ENCODE measurements at regions of chr19 and their contacts with region 1.

Region 1: GRCh38 chr19:46265217-46265828 is 31.5 kb upstream of the HIF3A start:
- DNase-seq: peak; percentile 73 to 80 (median 75)
- ATAC-seq: peak; percentile 89
- H3K4me3 ChIP-seq: no peak overlapping the region
- H3K27ac ChIP-seq: no peak overlapping the region
- H3K4me1 ChIP-seq: no peaks in the 10 kb centered on the region
- H3K27me3 ChIP-seq: peaks cover 0 to 9% of the 10 kb centered on the region in 2 donors
- CTCF ChIP-seq: peak; percentile 63 to 96 (median 94)
- POLR2A ChIP-seq: no peak

Region 2: DNA sequence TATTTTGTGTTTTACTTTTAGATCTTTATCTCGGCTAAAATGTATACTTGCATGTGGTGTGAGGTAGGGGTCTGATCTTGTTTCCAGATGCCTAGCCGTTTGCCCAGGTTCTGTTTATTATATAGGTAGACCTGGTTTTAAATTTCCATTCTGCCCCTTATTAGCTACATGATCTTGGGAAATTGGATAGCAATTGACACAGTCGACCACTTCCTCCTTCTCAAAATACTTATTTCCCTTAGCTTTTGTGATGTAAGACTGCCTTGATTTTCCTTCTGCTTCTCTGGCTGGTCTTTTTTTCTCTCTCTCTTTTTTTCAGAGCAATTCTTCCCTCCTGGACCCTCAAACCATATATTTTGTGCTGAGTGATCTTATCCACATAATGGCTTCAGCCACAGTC is 239.5 kb before region 1 on chr19:
- intact Hi-C with region 1: loop called (anchors 5 kb)
- DNase-seq: no peak
- ATAC-seq: no peak
- H3K4me3 ChIP-seq: no peak overlapping the region
- H3K27ac ChIP-seq: no peak overlapping the region
- H3K4me1 ChIP-seq: no peaks in the 10 kb centered on the region
- H3K27me3 ChIP-seq: peaks cover 2 to 15% of the 10 kb centered on the region in 2 donors
- CTCF ChIP-seq: no peak
- POLR2A ChIP-seq: no peak

Region 3: DNA sequence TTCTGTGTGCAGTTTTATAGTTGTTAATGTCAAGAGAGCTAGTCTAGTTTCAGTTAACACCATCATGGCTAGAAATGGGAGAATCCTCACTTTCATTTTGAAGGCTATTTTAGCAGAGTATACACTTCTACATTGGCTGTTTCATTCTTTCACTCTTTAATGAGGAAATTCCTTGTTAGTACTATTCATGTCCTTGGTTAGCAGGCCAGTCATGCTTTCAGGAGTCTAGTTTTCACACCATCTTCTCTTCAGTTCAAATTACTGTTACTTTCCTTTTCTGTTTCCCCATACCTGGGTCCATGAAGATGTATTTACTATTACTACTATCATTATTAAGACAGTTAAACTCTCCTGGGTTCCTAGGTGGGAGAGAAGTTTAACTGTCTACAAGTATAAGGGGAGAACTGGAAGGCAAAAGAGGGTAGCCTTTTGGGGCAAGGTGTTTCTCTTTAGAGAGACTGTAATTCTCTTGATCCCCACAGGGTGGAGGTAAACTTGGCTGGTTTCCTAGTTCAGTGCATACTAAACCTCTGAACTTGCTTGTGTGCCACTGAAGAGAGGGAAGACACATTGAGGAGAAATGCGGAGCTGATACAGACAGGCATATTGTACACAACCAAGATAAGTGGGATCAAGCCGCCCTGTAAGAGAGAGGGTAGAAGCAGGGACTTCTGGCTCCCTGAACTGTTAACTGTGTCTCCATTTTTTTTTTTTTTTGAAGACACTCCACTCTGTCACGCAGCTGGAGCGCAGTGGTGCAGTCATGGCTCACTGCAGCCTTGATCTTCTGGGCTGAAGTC is 183.2 kb before region 1 on chr19:
- intact Hi-C with region 1: loop called (anchors 10 kb)
- DNase-seq: peak; percentile 40 to 55 (median 42)
- ATAC-seq: peak; percentile 71
- H3K4me3 ChIP-seq: no peak overlapping the region
- H3K27ac ChIP-seq: no peak overlapping the region
- H3K4me1 ChIP-seq: peaks cover 6% of the 10 kb centered on the region
- H3K27me3 ChIP-seq: peaks cover 0 to 7% of the 10 kb centered on the region in 2 donors
- CTCF ChIP-seq: peak in 6 of 7 experiments; percentile 52 to 80 (median 72)
- POLR2A ChIP-seq: no peak

Measured in body of pancreas (tissue), 4 donors.